ENCODE measurements at regions of chr10 and their contacts with region 1.

Region 1: GRCh38 chr10:23994479-23995046 is 214.4 kb upstream of the KIAA1217 start:
- DNase-seq: peak; percentile 31
- H3K4me3 Mint-ChIP-seq: no peak overlapping the region
- H3K27ac Mint-ChIP-seq: no peak overlapping the region
- H3K4me1 Mint-ChIP-seq: no peaks in the 10 kb centered on the region
- H3K27me3 Mint-ChIP-seq: no peaks in the 10 kb centered on the region

Region 2: DNA sequence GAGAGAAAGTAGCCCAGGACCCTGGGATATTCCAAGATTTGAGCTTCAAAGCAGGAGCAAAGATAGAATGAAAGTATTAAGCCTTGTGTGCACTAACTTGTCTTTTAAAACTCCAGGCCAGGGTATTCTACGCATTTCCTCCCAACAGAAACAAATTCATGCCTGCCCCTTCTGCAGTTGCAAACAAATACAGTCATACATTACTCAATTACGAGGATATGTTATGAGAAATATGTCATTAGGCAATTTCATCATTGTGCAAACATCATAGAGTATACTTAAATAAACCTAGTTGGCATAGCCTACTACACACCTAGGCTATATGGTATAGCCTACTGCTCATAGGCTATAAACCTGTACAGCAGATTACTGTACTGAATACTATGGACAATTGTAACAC is 59.9 kb after region 1 on chr10:
- CTCF ChIA-PET with region 1: no interaction called
- DNase-seq: no peak
- H3K4me3 Mint-ChIP-seq: no peak overlapping the region
- H3K27ac Mint-ChIP-seq: no peak overlapping the region
- H3K4me1 Mint-ChIP-seq: no peaks in the 10 kb centered on the region
- H3K27me3 Mint-ChIP-seq: no peaks in the 10 kb centered on the region

Region 3: GRCh38 chr10:24104892-24105291 is 110.3 kb after region 1 on chr10:
- CTCF ChIA-PET with region 1: no interaction called
- DNase-seq: no peak
- H3K4me3 Mint-ChIP-seq: no peak overlapping the region
- H3K27ac Mint-ChIP-seq: no peak overlapping the region
- H3K4me1 Mint-ChIP-seq: no peaks in the 10 kb centered on the region
- H3K27me3 Mint-ChIP-seq: no peaks in the 10 kb centered on the region

Region 4: GRCh38 chr10:24262931-24263590 is 268.5 kb after region 1 on chr10:
- CTCF ChIA-PET with region 1: no interaction called
- DNase-seq: no peak
- H3K4me3 Mint-ChIP-seq: no peak overlapping the region
- H3K27ac Mint-ChIP-seq: no peak overlapping the region
- H3K4me1 Mint-ChIP-seq: no peaks in the 10 kb centered on the region
- H3K27me3 Mint-ChIP-seq: no peaks in the 10 kb centered on the region

Region 5: DNA sequence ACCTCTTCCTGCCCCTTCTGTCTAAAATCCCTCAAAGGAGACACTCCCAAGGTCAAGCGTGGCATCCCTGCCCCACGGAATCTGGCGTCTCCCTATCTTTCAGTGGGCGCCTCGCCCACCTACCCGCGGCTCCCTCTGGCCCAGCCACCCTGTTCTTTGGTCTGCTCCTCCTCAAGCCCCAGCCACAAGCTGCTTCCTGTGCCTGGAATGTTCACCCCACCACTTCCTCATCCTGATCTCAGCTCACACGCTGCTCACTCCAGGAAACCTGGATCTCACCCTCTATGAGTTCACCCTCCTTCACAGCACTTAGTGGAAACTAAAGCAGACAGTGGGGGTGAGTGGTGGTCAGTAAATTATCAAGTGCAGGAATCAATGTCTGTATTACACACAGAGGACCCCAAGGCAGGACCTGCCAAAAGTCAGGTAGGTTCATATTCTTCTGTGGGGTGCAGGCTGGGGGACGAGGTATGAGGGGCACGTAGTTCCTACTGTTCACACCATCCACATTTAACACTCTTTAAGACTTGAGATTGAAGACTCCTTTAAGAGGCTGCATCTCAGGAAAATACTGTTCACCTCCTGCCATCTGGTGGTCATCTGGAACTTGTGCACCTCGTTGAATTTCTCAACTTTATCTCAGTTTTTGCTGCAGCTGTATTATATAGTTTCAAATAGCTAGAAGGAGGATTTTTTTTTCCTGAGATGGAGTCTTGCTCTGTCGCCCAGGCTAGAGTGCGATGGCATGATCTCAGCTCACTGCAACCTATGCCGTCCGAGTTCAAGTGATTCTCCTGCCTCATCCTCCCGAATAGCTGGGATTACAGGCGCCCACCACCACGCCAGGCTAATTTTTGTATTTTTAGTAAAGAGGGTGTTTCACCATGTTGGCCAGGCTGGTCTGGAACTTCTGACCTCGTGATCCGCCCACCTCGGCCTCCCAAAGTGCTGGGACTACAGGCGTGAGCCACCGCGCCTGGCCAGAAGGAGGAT is 562.5 kb after region 1 on chr10:
- CTCF ChIA-PET with region 1: interaction called, 15 read pairs
- DNase-seq: no peak
- H3K4me3 Mint-ChIP-seq: no peak overlapping the region
- H3K27ac Mint-ChIP-seq: no peak overlapping the region
- H3K4me1 Mint-ChIP-seq: peaks cover 6% of the 10 kb centered on the region
- H3K27me3 Mint-ChIP-seq: peaks cover 8% of the 10 kb centered on the region

Measured in activated naive CD4-positive, alpha-beta T cell treated with anti-CD3 and anti-CD28 coated beads, Interleukin-2, amount 10 ng/mL, durations not matched to agents 7 days and 5 days (primary cell).